ENCODE measurements at regions of chr5 and their contacts with region 1.

Region 1: DNA sequence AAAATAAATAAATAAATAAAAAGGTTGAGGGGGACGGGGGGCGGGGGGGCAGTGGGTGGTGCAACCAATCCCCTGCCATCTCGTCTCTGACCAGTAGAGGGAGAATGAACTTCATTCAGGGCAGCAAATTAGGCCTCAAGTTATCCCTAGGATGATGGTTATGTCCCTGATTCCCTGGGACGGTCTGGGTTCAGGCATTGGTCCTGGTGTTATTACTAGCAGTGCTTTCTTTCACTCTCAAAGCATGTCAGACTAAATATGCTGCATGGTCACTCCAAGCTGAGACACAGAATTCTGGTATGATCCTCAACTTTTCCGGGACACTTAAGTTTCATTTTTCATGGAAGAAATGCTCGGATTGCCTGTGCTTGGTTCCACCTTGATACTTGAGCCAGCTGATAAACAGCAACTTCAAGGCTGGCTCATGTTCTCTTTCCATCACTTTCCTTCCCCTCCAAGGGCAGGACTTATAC is 59.4 kb downstream of the DAP start:
- DNase-seq: no peak

Region 2: DNA sequence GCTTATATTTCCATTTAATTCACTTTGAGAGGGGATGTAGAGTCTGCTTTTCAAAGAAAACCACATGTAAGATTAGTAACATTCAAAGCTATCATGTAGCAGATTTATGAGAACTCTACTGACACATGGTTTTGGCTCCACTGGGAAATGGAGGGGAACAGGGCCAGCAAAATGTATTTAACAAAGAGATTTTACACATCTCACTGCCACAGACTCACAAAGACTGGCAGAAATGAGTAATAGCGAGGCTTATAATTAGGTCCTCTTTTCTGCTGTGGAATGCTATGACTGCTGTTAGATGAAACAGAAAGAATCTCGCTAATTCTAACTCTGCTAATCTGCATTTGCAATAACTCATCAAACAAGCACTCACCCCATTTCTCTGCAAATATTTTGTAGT is 54.9 kb after region 1 on chr5:
- intact Hi-C with region 1: loop called (anchors 5 to 10 kb)
- DNase-seq: no peak